AG04450 (cell line): ENCODE measurements at regions of chr5 and their contacts with region 1.

Region 1: DNA sequence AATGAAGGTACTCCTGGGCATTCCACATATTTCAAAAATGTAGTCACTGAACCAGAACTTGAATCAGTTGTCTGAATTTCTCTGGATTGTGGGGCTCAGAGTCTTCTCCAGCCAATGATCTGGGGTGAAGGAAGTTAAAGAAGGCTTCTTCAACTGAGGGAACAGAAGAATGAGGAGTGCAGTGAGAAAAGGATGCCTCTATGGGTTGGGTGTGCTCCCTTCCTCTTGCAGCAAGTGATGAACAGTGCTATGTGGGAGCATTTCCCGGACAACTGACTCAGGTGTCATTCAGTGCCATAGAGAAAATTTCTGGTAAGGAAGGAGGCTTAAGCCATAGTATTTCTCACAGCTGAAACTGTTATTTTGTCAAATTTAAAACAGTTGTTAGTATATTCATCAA is 7.9 kb downstream of the LNPEP start:
- DNase-seq: no peak
- H3K4me3 ChIP-seq: no peak overlapping the region
- H3K27ac ChIP-seq: no peak overlapping the region
- H3K27me3 ChIP-seq: no peaks in the 10 kb centered on the region
- CTCF ChIP-seq: no peak

Region 2: DNA sequence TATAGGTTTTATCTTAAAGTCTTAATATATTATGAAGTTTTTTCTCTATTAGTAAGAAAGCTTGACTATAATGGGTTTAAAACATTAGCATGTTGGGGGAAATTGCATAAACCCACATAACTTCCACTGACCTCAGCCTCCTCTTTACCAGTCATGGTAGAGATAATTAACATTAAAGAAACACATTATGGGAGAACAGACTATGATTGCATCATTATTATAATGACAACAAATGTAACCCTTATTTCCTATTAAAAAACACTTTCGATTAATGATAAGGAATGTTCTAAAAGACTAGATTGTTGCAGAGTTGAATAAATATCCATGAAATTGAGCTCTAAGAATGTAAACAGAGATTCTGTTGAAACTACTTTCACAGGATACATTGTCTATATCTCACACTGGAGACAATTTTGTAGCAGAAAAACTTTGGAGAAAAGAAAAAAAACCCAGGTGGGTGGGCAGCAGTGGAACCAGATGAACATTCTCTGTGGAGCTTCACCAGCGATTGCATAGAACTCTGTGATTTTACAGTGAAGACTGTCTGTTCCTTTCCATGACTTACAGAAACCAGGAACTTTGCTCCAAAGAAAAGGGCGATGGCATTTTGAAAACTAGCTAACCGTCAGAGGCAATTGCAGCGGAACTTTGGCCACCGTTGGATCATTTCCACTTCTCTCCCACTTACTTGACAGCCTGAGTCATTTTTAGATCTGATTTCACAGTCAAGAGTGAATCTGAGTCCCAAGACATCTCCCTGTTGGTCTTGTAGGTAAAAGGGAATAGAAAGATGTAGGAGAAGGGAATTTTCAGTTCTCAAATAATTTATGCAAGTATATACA is 88.6 kb before region 1 on chr5:
- CTCF ChIA-PET with region 1: no interaction called
- POLR2A ChIA-PET with region 1: interaction called, 12 read pairs
- DNase-seq: peak; percentile 33
- H3K4me3 ChIP-seq: peak overlapping the region; percentile 42
- H3K27ac ChIP-seq: peak overlapping the region; percentile 74
- H3K27me3 ChIP-seq: no peaks in the 10 kb centered on the region
- CTCF ChIP-seq: no peak

Region 3: GRCh38 chr5:96927008-96927407 is 16.8 kb before region 1 on chr5:
- CTCF ChIA-PET with region 1: no interaction called
- POLR2A ChIA-PET with region 1: no interaction called
- DNase-seq: no peak
- H3K4me3 ChIP-seq: no peak overlapping the region
- H3K27ac ChIP-seq: no peak overlapping the region
- H3K27me3 ChIP-seq: no peaks in the 10 kb centered on the region
- CTCF ChIP-seq: no peak